Heart left ventricle (tissue), 16 donors: ENCODE measurements at regions of chr14 and their contacts with region 1.

Region 1: GRCh38 chr14:69574263-69574953 is at the start of gene CCDC177:
- DNase-seq: peak in 2 of 5 donors; percentile 34 to 77
- ATAC-seq: peak in 3 of 4 donors; percentile 27 to 52 (median 52)
- H3K4me3 ChIP-seq: peak within 1 kb of the TSS in 9 of 12 donors; percentile 1 to 38 (median 22)
- H3K27ac ChIP-seq: no peak within 1 kb of the TSS
- H3K4me1 ChIP-seq: peaks cover 10 to 36% (median 28%) of the 10 kb centered on the region in 12 donors
- H3K27me3 ChIP-seq: peaks cover 41 to 86% (median 71%) of the 10 kb centered on the region in 9 donors
- CTCF ChIP-seq: peak; percentile 62 to 90 (median 79)
- POLR2A ChIP-seq: no peak
- total RNA-seq, gene CCDC177: not detected

Region 2: GRCh38 chr14:69226178-69226577 is 348.2 kb before region 1 on chr14:
- intact Hi-C with region 1: no loop called
- DNase-seq: peak in 1 of 5 donors; percentile 10
- ATAC-seq: peak; percentile 52 to 87 (median 82)
- H3K4me3 ChIP-seq: no peak overlapping the region
- H3K27ac ChIP-seq: peak overlapping the region in 11 of 12 donors; percentile 41 to 81 (median 59)
- H3K4me1 ChIP-seq: peaks cover 0 to 27% (median 11%) of the 10 kb centered on the region in 12 donors
- H3K27me3 ChIP-seq: no peaks in the 10 kb centered on the region
- CTCF ChIP-seq: no peak
- POLR2A ChIP-seq: no peak

Region 3: DNA sequence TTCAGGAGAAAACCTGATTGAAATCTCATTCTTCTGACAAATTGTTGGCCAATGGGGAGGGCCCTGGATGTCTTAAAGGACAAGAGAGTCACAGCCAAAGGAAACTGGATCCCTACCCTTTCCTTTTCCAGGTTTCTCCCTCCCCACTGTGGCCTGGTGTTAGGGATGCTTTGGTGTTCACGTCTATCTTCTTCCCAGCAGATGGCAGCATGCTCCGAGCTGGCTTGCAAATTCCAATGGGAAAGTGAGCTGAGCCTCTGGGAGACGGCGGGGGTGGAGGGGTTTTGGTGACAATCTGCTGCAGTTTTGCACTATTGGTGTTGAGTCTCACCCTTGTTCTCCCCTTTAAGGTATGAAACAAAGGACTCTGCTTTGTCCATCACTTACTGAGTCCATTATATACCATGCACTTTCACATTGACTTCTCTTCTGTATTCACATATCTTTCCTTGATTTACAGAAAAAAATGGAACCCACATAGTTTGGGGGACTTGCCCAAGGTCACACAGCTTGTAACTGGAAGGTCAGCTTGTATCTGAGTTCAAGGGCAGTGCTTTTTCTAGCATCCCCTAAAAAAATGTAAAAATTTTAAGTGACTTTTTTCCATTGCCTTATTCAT is 39.1 kb before region 1 on chr14:
- intact Hi-C with region 1: loop called in 2 of 10 experiments (anchors 2 to 5 kb)
- DNase-seq: peak in 2 of 5 donors; percentile 25 to 40
- ATAC-seq: peak in 2 of 4 donors; percentile 38 to 57
- H3K4me3 ChIP-seq: no peak overlapping the region
- H3K27ac ChIP-seq: no peak overlapping the region
- H3K4me1 ChIP-seq: peaks cover 0 to 5% (median 0%) of the 10 kb centered on the region in 12 donors
- H3K27me3 ChIP-seq: peaks cover 0 to 16% (median 0%) of the 10 kb centered on the region in 9 donors
- CTCF ChIP-seq: peak; percentile 17 to 70 (median 48)
- POLR2A ChIP-seq: no peak